ENCODE measurements at regions of chr3 and their contacts with region 1.

Region 1: DNA sequence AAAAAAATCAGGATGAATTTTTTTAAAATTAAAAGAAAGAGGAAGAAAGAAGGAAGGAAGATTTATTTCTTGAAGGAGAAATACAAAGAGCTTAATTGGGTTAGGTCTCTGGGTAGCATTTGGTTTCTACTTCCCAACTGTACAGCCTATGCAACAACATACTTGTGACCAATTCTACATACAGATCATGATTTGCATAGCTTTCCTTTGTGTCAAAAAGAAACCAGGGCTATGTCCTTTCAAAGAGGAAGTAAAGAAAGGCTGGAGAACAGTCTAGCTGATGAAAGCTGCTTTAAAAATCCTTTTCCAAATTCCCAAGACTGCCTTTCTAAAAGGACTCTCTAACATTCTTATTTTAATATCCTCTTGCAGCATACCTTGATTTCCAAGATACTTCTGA is 6.1 kb upstream of the HGD start:
- DNase-seq: peak; percentile 79
- ATAC-seq: peak; percentile 94
- H3K4me3 ChIP-seq: no peak overlapping the region
- H3K27ac ChIP-seq: peak overlapping the region; percentile 44; the same call in 1 of the 2 replicates
- H3K4me1 ChIP-seq: peaks cover 8% of the 10 kb centered on the region
- H3K27me3 ChIP-seq: no peaks in the 10 kb centered on the region
- CTCF ChIP-seq: no peak
- POLR2A ChIP-seq: no peak
- RAD21 ChIP-seq: no peak

Region 2: GRCh38 chr3:120550546-120550945 is 137.6 kb before region 1 on chr3:
- CTCF ChIA-PET with region 1: no interaction called
- POLR2A ChIA-PET with region 1: no interaction called
- dilution Hi-C with region 1: no loop called
- in situ Hi-C with region 1: no loop called
- intact Hi-C with region 1: no loop called
- DNase-seq: no peak
- ATAC-seq: no peak
- H3K4me3 ChIP-seq: no peak overlapping the region
- H3K27ac ChIP-seq: no peak overlapping the region
- H3K4me1 ChIP-seq: no peaks in the 10 kb centered on the region
- H3K27me3 ChIP-seq: peaks cover 2% of the 10 kb centered on the region
- CTCF ChIP-seq: no peak
- POLR2A ChIP-seq: no peak
- RAD21 ChIP-seq: no peak

Region 3: DNA sequence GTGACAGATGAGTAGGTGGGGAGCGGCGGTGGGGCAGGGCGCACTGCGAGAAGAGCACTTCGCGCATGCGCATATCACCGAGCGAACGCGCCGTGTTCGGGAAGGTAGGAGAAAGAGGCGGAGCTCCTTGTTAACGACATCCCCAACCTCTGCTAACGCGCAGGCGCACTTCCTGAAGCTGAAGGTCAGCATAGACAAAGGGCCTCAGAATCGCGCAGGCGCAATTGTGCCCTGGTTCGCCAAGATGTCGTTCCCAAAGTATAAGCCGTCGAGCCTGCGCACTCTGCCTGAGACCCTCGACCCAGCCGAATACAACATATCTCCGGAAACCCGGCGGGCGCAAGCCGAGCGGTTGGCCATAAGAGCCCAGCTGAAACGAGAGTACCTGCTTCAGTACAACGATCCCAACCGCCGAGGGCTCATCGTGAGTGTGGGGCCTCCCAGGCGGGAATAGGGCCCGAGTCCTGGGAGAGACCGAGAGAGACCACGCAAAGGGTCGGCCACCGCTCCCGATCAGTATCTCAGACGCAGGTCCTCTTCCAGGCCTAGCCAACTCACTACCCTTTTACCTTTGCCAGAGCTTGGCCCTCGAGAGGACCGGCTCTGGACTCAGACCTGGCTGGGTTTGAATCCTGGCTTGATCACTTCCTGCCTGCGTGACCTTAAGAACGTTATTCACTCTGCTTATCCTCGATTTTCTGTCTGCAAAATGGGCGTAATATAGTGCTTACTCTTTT is 91.8 kb before region 1 on chr3 and contains the start of gene NDUFB4:
- CTCF ChIA-PET with region 1: no interaction called
- POLR2A ChIA-PET with region 1: no interaction called
- dilution Hi-C with region 1: no loop called
- in situ Hi-C with region 1: no loop called
- intact Hi-C with region 1: loop called (anchors 5 kb)
- DNase-seq: peak; percentile 99
- ATAC-seq: peak; percentile 99
- H3K4me3 ChIP-seq: peak within 1 kb of the TSS; percentile 70
- H3K27ac ChIP-seq: peak within 1 kb of the TSS; percentile 87
- H3K4me1 ChIP-seq: no peaks in the 10 kb centered on the region
- H3K27me3 ChIP-seq: no peaks in the 10 kb centered on the region
- CTCF ChIP-seq: no peak
- POLR2A ChIP-seq: peak; percentile 88
- RAD21 ChIP-seq: 0 out of 2 replicates have a peak, but pooled peaks have one; percentile 8
- total RNA-seq, gene NDUFB4: 53.9 and 62.8 TPM in 2 replicates

Region 4: GRCh38 chr3:120661118-120661935 is 26.8 kb before region 1 on chr3:
- CTCF ChIA-PET with region 1: no interaction called
- POLR2A ChIA-PET with region 1: no interaction called
- dilution Hi-C with region 1: no loop called
- in situ Hi-C with region 1: no loop called
- intact Hi-C with region 1: no loop called
- DNase-seq: peak; percentile 51
- ATAC-seq: peak; percentile 75
- H3K4me3 ChIP-seq: no peak overlapping the region
- H3K27ac ChIP-seq: no peak overlapping the region
- H3K4me1 ChIP-seq: peaks cover 3% of the 10 kb centered on the region; the same call in 1 of the 2 replicates
- H3K27me3 ChIP-seq: 0 out of 2 replicates have a peak, but pooled peaks cover 2% of the 10 kb centered on the region
- CTCF ChIP-seq: no peak
- POLR2A ChIP-seq: no peak
- RAD21 ChIP-seq: no peak

Region 5: GRCh38 chr3:120713262-120713661 is 25.1 kb after region 1 on chr3:
- CTCF ChIA-PET with region 1: no interaction called
- POLR2A ChIA-PET with region 1: interaction called, 11 read pairs
- dilution Hi-C with region 1: no loop called
- in situ Hi-C with region 1: no loop called
- intact Hi-C with region 1: no loop called
- DNase-seq: no peak
- ATAC-seq: no peak
- H3K4me3 ChIP-seq: no peak overlapping the region
- H3K27ac ChIP-seq: no peak overlapping the region
- H3K4me1 ChIP-seq: no peaks in the 10 kb centered on the region
- H3K27me3 ChIP-seq: no peaks in the 10 kb centered on the region
- CTCF ChIP-seq: no peak
- POLR2A ChIP-seq: no peak
- RAD21 ChIP-seq: no peak

Measured in IMR-90 (cell line).